Left colon (tissue), 2 donors: ENCODE measurements at regions of chr12 and their contacts with region 1.

Region 1: DNA sequence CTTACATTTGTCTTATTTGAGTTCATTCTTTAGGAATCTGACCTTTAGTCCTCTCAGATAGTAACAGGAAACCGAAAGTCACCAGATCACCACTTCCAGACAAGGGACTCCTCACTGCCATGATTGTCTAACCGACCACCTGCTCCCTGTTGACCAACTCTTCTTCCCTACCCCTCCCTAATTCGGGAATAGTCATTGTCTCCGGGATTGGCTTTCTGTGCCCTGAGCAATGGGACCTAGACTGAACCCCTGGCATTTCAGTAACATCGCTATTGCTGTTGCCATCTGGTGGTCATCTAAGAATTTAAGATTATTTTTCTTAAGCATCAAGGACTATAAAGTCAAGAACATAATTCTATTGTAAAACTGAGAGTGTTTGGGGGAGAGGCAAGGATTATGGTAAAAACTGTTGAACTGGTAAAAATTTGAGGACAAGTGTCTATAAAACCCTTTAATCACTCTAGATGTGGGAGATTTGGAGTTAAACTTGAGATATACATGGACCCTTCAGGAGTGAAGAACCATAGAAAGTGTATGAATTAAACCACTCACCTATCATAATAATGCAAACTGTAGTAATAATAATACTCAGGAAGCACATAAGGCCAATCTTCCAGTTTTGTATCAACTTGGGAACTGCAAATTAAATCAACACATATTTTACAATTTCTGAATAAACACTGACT is 6.3 kb downstream of the CLEC2A start:
- DNase-seq: no peak
- ATAC-seq: peak; percentile 47

Region 2: DNA sequence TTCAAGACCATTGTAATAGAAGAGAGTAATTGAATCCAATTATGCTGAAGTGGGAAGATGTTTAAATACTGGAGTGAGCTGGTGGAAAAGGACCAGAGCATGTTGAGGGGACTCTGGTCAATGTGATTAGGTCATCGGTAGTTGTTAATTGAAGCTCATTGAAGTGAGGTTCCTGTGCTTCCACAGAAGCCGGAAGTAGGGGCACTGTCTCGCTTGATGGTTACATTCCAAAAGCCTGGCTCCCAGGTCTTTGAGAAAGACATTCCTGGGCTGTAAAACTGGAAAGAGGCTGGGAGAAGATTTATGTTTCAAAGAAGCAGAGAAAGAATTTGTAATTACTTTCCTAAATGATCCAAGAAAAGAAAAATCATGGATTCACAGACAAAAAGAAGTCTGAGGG is 180.7 kb before region 1 on chr12:
- intact Hi-C with region 1: loop called (anchors 5 kb)
- DNase-seq: no peak
- ATAC-seq: no peak

Region 3: GRCh38 chr12:9750276-9751203 is 175.3 kb before region 1 on chr12:
- intact Hi-C with region 1: loop called (anchors 5 kb)
- DNase-seq: peak; percentile 26 to 42
- ATAC-seq: peak; percentile 73

Region 4: DNA sequence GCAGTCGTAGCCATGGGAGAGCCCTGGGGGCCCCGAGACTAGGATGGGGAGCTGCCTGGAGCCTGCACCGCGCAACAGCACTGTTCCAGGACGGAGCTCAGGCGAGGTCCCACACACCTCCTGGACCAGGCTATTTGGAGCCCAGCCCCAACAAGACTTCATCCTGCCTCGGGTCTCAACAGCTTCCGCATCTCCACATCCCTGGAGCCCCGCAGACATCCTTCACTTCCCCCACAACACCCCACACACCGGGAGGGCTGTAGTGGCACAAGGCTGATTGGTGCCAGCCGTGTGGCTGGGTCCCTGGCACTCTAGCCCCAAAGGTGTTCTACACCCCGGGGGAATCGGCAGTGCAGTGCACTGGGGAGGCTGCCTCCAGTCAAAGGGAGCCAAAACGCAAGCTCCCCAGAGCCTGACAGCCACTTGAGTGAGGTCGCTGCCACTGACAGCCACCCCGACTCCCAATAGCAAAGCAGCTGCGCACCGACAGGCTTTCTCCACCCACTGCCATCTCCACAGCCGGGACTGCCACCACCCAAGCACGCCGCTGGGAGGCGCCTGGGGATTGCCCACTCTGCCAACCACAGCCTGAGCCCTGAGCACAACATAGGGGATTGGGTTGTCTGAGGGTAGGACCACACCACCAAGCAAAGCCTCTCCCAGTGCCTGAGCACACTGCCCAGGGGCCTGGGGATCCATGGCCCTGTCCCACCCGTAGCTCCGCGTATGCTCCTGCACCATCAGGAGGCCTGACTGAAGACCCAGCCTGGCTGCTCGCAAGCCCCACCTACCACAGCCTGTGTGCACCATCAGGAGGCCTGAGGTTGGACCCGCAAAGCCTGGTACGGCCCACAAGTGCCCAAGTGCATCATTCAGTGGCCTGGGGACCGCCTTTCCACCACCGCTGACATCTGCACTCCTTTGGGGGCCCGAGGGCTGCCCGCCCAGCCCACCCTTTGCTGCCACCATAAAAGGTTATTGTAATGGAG is 111.7 kb before region 1 on chr12:
- intact Hi-C with region 1: loop called in 1 of 2 experiments (anchors 10 kb)
- DNase-seq: peak; percentile 52 to 73
- ATAC-seq: peak; percentile 71

Region 5: GRCh38 chr12:9872742-9873141 is 53.1 kb before region 1 on chr12:
- intact Hi-C with region 1: no loop called
- DNase-seq: no peak
- ATAC-seq: no peak